ENCODE measurements at regions of chr2 and their contacts with region 1.

Region 1: DNA sequence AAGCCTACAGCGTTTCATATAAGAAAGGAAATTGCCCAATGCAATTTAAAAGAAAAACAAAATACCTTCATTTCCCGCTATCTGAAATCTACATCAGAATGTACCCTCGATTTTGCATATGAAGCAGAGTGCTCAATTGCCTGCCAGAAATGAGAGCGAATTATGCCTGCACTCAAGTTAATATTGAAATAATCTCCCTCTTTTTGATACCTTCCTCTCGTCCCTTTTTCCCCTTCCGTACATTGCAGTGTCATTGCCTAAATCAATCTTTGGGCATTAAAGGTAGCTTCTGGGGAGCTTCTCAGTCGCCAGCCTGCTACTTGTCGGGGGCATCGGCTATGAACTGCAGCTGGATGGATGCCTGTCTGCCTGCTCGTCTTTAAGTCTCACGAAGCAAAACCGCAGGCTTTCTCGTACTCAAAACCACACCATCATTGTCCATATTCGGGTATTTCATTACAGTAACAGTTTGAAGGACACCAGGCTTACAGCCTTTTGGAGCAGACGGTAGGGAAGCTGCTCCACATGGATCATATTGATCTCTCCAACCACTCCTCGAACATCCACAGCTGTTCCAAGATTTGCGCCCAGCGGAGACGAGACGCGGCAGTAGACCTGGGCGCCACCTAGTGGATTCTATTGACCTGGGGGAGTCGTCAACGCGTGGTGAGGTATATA is 64.0 kb upstream of the HNRNPA3 start:
- DNase-seq: peak; percentile 47 to 84 (median 75)
- ATAC-seq: peak; percentile 89
- H3K4me3 ChIP-seq: peak overlapping the region; percentile 58 to 69
- H3K4me3 Mint-ChIP-seq: peak overlapping the region; percentile 86
- H3K27ac ChIP-seq: no peak overlapping the region
- H3K27ac Mint-ChIP-seq: no peak overlapping the region
- H3K4me1 ChIP-seq: peaks cover 11% of the 10 kb centered on the region
- H3K4me1 Mint-ChIP-seq: peaks cover 14% of the 10 kb centered on the region
- H3K27me3 ChIP-seq: peaks cover 6 to 14% of the 10 kb centered on the region in 2 experiments
- H3K27me3 Mint-ChIP-seq: peaks cover 29% of the 10 kb centered on the region
- CTCF ChIP-seq: peak; percentile 94

Region 2: DNA sequence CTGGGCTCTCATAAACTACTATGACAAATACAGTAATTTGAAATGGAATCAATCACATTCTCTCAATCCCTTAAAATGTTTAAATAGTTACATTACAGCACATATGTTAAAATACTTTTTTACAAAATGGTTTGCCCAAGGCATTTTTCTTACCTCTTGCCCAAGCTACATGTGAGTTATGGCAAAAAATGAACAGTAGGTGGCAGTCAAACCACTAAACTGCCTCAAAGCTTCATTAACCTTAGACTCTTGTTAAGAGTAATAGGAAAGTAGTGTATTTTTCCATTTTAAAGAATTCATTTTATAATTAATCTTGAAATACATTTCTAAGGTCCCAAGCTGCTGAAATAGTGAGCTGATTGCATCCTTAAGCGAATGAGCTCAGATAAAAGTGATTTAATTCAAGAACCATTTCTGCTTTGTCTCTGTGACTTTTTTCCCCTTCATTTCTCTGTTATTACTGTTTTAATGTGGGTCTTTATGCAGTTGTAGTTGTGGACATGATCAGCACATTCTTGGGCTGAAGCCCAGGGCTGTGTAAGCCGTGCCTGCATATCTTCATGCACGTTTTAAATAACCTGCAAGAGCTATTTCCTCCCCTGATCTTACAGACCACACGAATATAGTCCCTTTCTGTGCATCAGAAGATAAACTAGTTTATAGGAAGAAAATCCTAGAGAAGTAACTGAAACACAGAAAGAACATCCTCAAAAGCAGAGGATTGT is 1458.3 kb before region 1 on chr2:
- CTCF ChIA-PET with region 1: no interaction called
- POLR2A ChIA-PET with region 1: no interaction called
- intact Hi-C with region 1: loop called in 1 of 2 experiments (anchors 5 kb)
- DNase-seq: peak in 3 of 9 experiments; percentile 14 to 63 (median 59)
- ATAC-seq: peak; percentile 38
- H3K4me3 ChIP-seq: no peak overlapping the region
- H3K4me3 Mint-ChIP-seq: no peak overlapping the region
- H3K27ac ChIP-seq: no peak overlapping the region
- H3K27ac Mint-ChIP-seq: no peak overlapping the region
- H3K4me1 ChIP-seq: no peaks in the 10 kb centered on the region
- H3K4me1 Mint-ChIP-seq: no peaks in the 10 kb centered on the region
- H3K27me3 ChIP-seq: peaks cover 0 to under 1% of the 10 kb centered on the region in 2 experiments
- H3K27me3 Mint-ChIP-seq: peaks cover 27% of the 10 kb centered on the region
- CTCF ChIP-seq: peak; percentile 56

Region 3: DNA sequence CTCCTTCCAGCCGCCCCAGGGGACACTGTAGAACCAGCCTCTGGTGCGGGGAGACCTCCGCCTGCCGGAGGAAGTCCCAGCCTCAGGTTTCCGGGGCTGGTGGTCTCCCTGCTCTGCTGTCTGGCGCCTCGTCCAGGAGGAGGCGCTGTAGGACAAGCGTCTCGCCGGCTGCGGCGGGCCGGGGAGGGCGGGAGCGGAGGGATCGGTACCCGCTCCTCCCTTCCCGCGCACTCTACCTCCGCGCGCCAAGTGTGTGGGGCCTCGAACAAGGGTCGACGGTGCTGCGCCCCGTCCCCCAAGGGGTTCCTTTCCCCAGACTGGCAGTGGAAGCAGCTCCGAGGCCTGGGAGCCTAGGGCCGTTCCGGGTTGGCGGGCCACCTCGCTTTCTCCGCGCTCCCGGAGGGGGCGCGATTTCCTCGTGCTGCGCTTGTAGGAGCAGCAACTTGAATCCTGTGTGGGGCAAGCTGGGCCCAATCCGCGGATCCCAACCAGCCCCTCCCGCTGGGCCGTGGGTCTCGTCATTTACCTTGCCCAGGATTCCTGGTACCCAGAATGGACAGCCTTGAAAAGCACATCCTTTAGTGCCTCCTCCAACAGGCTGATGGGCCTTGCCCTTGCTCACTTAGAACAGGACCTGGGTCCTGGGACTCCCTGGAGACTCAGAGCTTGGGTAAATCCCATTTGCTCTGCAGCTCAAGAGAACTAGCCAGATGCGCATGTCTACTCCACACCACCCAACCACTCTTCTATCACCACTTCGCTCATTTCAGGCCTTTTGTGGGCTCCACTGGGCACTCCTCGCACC is 1007.9 kb before region 1 on chr2:
- CTCF ChIA-PET with region 1: interaction called, 10 read pairs
- POLR2A ChIA-PET with region 1: interaction called, 3 read pairs
- intact Hi-C with region 1: no loop called
- DNase-seq: peak; percentile 37 to 84 (median 75)
- ATAC-seq: peak; percentile 93
- H3K4me3 ChIP-seq: peak overlapping the region; percentile 28 to 38
- H3K4me3 Mint-ChIP-seq: peak overlapping the region; percentile 8
- H3K27ac ChIP-seq: no peak overlapping the region
- H3K27ac Mint-ChIP-seq: no peak overlapping the region
- H3K4me1 ChIP-seq: peaks cover 22% of the 10 kb centered on the region
- H3K4me1 Mint-ChIP-seq: peaks cover 32% of the 10 kb centered on the region
- H3K27me3 ChIP-seq: peaks cover 46 to 47% of the 10 kb centered on the region in 2 experiments
- H3K27me3 Mint-ChIP-seq: peaks cover 80% of the 10 kb centered on the region
- CTCF ChIP-seq: peak; percentile 76

Region 4: GRCh38 chr2:176454893-176455811 is 693.5 kb before region 1 on chr2:
- CTCF ChIA-PET with region 1: interaction called, 6 read pairs
- POLR2A ChIA-PET with region 1: no interaction called
- intact Hi-C with region 1: loop called in 1 of 2 experiments (anchors 5 kb)
- DNase-seq: peak; percentile 57 to 88 (median 75)
- ATAC-seq: peak; percentile 76
- H3K4me3 ChIP-seq: no peak overlapping the region
- H3K4me3 Mint-ChIP-seq: no peak overlapping the region
- H3K27ac ChIP-seq: no peak overlapping the region
- H3K27ac Mint-ChIP-seq: no peak overlapping the region
- H3K4me1 ChIP-seq: no peaks in the 10 kb centered on the region
- H3K4me1 Mint-ChIP-seq: peaks cover 2% of the 10 kb centered on the region
- H3K27me3 ChIP-seq: peaks cover 0 to 3% of the 10 kb centered on the region in 2 experiments
- H3K27me3 Mint-ChIP-seq: peaks cover 42% of the 10 kb centered on the region
- CTCF ChIP-seq: peak; percentile 97

Region 5: DNA sequence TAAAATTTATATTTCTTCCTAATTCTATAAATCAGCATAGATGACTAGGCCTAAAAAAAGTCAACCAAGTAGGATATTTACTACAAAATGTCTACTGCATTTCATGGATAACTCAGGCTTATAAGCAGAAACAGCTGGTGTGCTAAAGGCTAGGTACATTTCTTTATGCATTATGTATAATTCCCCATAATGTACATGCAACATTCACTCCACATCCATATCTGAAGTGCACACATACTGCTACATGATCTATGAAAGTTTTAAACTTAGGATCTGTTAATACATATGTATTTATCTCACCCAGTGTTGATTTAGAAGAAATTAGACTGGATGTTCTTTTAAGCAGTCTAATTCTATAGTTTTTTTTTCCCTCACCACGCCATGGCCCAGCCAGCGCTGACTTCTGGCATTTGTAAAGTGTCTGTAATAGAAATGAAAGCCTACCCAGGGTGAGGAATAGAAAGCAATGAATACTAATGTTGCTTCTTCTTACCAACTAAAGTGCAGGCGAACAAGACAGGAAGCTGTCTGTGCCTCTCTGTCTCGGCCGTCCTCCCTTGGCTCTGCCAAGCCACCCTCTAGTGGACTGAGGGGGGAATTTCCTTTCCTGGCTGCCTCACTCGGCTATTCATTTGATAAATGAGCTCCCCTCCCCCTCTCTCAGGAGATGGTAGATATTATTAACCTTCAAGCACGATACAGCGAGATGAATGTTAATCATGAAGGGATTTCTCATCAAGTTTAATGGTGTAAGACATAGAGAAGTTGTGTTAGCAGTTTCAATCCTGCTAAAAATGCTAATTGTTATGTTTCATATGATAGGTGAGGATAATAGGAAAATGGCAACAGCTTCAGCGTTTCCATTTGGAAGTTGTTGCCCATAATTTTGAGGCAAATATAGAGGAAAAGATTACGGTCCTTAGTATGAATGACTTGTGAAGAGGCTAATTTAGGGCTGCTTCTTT is 494.9 kb before region 1 on chr2:
- CTCF ChIA-PET with region 1: interaction called, 22 read pairs
- POLR2A ChIA-PET with region 1: no interaction called
- intact Hi-C with region 1: loop called (anchors 1 to 5 kb)
- DNase-seq: peak in 5 of 9 experiments; percentile 22 to 55 (median 32)
- ATAC-seq: no peak
- H3K4me3 ChIP-seq: no peak overlapping the region
- H3K4me3 Mint-ChIP-seq: no peak overlapping the region
- H3K27ac ChIP-seq: no peak overlapping the region
- H3K27ac Mint-ChIP-seq: no peak overlapping the region
- H3K4me1 ChIP-seq: peaks cover 12% of the 10 kb centered on the region
- H3K4me1 Mint-ChIP-seq: peaks cover 14% of the 10 kb centered on the region
- H3K27me3 ChIP-seq: peaks cover 0 to 4% of the 10 kb centered on the region in 2 experiments
- H3K27me3 Mint-ChIP-seq: peaks cover 36% of the 10 kb centered on the region
- CTCF ChIP-seq: peak; percentile 42

Region 6: DNA sequence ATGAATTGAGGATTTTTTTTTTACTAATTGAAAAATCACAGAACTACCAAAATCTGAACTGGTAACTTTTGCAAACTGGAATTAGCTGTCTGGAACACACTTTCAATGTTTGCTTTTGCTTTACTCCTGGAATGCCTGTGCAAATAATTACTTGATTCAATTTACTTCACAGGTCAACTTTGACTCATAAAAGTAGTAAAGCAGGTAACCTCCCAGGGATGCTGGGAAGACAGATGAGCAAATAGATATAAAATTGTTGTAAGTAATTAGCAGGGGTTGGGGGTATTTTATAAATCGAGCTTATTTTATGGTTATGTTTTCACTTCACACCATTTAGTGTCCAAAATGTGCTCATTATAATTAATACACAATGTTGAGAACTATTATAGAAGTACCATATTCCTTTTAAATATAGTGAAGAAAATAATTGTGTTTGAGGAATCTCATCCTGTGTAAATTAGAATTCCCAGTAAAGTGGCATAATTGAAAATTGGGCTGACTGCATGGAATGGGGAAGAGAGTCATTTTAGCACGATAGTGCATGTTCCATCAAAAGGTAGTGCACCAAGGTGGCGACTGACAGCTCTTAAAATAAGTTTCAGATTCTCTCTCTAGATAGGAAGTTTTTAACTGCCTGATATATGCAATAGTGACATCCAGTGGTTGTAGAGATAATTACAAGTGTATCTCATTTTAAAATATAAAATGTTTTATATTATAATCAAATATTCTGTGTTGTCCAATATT is 334.1 kb before region 1 on chr2:
- CTCF ChIA-PET with region 1: interaction called, 11 read pairs
- POLR2A ChIA-PET with region 1: no interaction called
- intact Hi-C with region 1: loop called (anchors 5 kb)
- DNase-seq: peak in 2 of 9 experiments; percentile 51 to 65
- ATAC-seq: peak; percentile 79
- H3K4me3 ChIP-seq: no peak overlapping the region
- H3K4me3 Mint-ChIP-seq: peak overlapping the region; percentile 19
- H3K27ac ChIP-seq: no peak overlapping the region
- H3K27ac Mint-ChIP-seq: no peak overlapping the region
- H3K4me1 ChIP-seq: peaks cover 45% of the 10 kb centered on the region
- H3K4me1 Mint-ChIP-seq: peaks cover 42% of the 10 kb centered on the region
- H3K27me3 ChIP-seq: no peaks in the 10 kb centered on the region
- H3K27me3 Mint-ChIP-seq: no peaks in the 10 kb centered on the region
- CTCF ChIP-seq: peak; percentile 95

Region 7: GRCh38 chr2:177242116-177242987 is 93.7 kb after region 1 on chr2:
- CTCF ChIA-PET with region 1: no interaction called
- POLR2A ChIA-PET with region 1: no interaction called
- intact Hi-C with region 1: no loop called
- DNase-seq: peak in 1 of 9 experiments; percentile 36
- ATAC-seq: no peak
- H3K4me3 ChIP-seq: no peak overlapping the region
- H3K4me3 Mint-ChIP-seq: peak overlapping the region; percentile 23
- H3K27ac ChIP-seq: peak overlapping the region in 1 of 2 experiments; percentile 80
- H3K27ac Mint-ChIP-seq: peak overlapping the region; percentile 68
- H3K4me1 ChIP-seq: peaks cover 76% of the 10 kb centered on the region
- H3K4me1 Mint-ChIP-seq: peaks cover 85% of the 10 kb centered on the region
- H3K27me3 ChIP-seq: no peaks in the 10 kb centered on the region
- H3K27me3 Mint-ChIP-seq: no peaks in the 10 kb centered on the region
- CTCF ChIP-seq: no peak

Region 8: GRCh38 chr2:178112202-178113152 is 963.9 kb after region 1 on chr2 and contains the start of gene RBM45:
- CTCF ChIA-PET with region 1: no interaction called
- POLR2A ChIA-PET with region 1: no interaction called
- intact Hi-C with region 1: loop called in 1 of 2 experiments (anchors 5 kb)
- DNase-seq: peak; percentile 62 to 93 (median 85)
- ATAC-seq: peak; percentile 91
- H3K4me3 ChIP-seq: peak within 1 kb of the TSS; percentile 73 to 81
- H3K4me3 Mint-ChIP-seq: peak within 1 kb of the TSS; percentile 94
- H3K27ac ChIP-seq: peak within 1 kb of the TSS; percentile 59 to 60
- H3K27ac Mint-ChIP-seq: peak within 1 kb of the TSS; percentile 89
- H3K4me1 ChIP-seq: peaks cover 16% of the 10 kb centered on the region
- H3K4me1 Mint-ChIP-seq: peaks cover 44% of the 10 kb centered on the region
- H3K27me3 ChIP-seq: no peaks in the 10 kb centered on the region
- H3K27me3 Mint-ChIP-seq: no peaks in the 10 kb centered on the region
- CTCF ChIP-seq: peak; percentile 95
- total RNA-seq, gene RBM45: 6.4 to 6.8 TPM